Esophagus muscularis mucosa (tissue), 4 donors: ENCODE measurements at regions of chr3 and their contacts with region 1.

Region 1: DNA sequence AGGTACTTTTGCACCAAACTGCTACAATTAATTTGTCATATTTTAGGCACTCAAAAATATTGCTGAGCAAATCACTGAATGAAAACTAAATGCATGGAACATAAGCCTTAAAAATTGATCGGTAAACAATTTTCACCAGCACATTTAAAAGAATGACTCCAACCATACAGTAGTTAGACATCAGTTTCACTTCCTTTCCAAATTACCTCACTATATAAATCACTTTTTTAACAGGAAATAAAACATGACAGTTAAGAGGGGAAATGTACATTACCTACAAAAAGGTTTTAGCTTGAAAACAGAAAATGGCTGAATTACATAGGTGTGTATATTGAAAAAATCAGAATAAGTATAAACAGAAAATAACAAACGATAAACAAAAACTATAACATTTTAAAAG is 108.4 kb downstream of the SERPINI1 start:
- DNase-seq: no peak
- H3K4me3 ChIP-seq: no peak overlapping the region
- H3K27ac ChIP-seq: no peak overlapping the region
- H3K4me1 ChIP-seq: peaks cover 0 to 12% (median 8%) of the 10 kb centered on the region in 4 donors
- H3K27me3 ChIP-seq: no peaks in the 10 kb centered on the region
- CTCF ChIP-seq: no peak
- EP300 ChIP-seq: no peak
- POLR2A ChIP-seq: no peak

Region 2: GRCh38 chr3:168034152-168034928 is 190.5 kb after region 1 on chr3:
- intact Hi-C with region 1: loop called (anchors 10 kb)
- DNase-seq: no peak
- H3K4me3 ChIP-seq: no peak overlapping the region
- H3K27ac ChIP-seq: peak overlapping the region in 3 of 4 donors; percentile 20 to 47 (median 29)
- H3K4me1 ChIP-seq: peaks cover 4 to 21% (median 14%) of the 10 kb centered on the region in 4 donors
- H3K27me3 ChIP-seq: no peaks in the 10 kb centered on the region
- CTCF ChIP-seq: no peak
- EP300 ChIP-seq: no peak
- POLR2A ChIP-seq: no peak